ENCODE measurements at regions of chr11 and their contacts with region 1.

Region 1: DNA sequence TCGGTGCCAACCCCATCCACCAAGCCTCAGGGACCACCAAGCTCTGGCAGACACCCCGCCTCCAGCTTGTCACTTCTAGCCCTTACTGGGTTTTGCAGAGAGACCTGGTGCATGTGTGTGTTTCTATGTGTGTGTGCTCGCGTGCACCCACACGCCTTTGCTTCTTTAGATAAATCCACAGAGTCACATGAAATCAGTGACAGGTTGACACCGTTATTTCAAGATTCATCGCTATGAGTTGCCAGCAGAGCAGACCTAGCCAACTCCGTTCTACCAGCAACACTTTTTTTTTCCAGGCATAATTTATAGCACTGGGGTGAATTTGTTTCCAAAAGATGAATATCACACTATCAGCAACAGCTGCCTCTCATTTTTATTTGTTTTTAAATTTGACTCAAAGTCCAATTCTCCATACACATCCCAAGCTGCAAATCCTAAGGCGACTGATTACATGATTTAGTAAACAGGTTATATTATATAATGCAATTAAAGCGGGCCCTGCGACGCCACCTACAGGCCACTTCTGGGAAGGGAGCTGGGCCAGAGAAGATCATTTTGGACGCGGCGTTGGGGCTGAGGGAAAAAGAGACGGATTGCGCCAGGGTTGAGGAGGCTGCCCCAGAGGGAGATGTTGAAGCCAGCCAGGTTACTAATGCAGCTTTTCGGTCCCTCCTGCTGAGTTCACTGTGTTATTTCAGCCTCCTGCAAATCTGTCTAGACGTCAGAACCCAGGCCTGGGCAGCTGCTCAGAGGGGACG is 150.5 kb downstream of the FEZ1 start:
- DNase-seq: peak; percentile 32
- H3K4me3 ChIP-seq: no peak overlapping the region
- H3K27ac ChIP-seq: no peak overlapping the region
- H3K4me1 ChIP-seq: no peaks in the 10 kb centered on the region
- H3K27me3 ChIP-seq: no peaks in the 10 kb centered on the region
- CTCF ChIP-seq: peak; percentile 85 to 89

Region 2: GRCh38 chr11:124961972-124962609 is 383.5 kb before region 1 on chr11:
- CTCF ChIA-PET with region 1: no interaction called
- dilution Hi-C with region 1: no loop called
- in situ Hi-C with region 1: loop called (anchors 5 to 10 kb)
- intact Hi-C with region 1: loop called (anchors 1 kb)
- DNase-seq: peak; percentile 67
- H3K4me3 ChIP-seq: no peak overlapping the region
- H3K27ac ChIP-seq: no peak overlapping the region
- H3K4me1 ChIP-seq: no peaks in the 10 kb centered on the region
- H3K27me3 ChIP-seq: no peaks in the 10 kb centered on the region
- CTCF ChIP-seq: peak; percentile 73 to 76

Region 3: GRCh38 chr11:125091247-125091876 is 254.2 kb before region 1 on chr11:
- CTCF ChIA-PET with region 1: no interaction called
- dilution Hi-C with region 1: no loop called
- in situ Hi-C with region 1: no loop called
- intact Hi-C with region 1: loop called (anchors 2 kb)
- DNase-seq: peak; percentile 57
- H3K4me3 ChIP-seq: no peak overlapping the region
- H3K27ac ChIP-seq: no peak overlapping the region
- H3K4me1 ChIP-seq: peaks cover 14% of the 10 kb centered on the region
- H3K27me3 ChIP-seq: no peaks in the 10 kb centered on the region
- CTCF ChIP-seq: peak; percentile 46 to 53

Region 4: DNA sequence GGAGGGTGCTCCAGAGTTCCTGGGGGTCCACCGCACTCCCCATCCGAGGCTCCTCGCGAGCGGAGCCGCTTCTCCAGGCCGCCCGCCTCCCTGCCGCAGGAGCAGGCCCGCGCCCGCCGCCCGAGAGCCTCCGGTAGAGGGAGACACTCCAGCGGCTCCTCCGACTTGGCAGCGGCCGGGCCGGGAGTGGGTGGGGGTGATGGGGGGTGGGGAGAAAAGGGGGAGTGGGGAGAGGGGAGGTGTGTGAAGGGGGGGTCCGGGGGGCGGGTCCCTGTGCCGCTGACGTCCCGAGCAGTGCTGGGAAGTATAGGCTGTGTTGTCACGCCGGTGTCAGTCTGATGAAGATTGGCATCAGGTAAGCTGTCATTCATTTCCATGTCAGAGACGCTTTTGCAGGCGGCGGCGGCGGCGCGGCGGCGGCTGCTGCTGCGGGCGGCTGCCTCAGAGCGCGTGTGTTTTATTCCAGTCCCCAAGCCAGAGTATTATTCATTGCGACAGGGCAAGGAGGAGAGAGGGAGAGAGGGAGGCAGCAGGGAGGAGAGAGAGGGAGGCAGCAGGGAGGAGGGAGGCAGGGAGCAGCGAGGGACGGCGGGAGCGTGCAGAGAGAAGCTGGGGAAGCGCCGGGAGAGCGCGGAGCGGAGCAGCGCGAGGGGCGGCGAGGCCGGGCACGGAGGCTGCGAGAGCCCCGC is 181.0 kb before region 1 on chr11 and contains the start of gene PKNOX2:
- CTCF ChIA-PET with region 1: interaction called, 4 read pairs
- dilution Hi-C with region 1: no loop called
- in situ Hi-C with region 1: loop called (anchors 10 kb)
- intact Hi-C with region 1: loop called (anchors 1 kb)
- DNase-seq: peak; percentile 47
- H3K4me3 ChIP-seq: peak within 1 kb of the TSS; percentile 56 to 69 (median 59)
- H3K27ac ChIP-seq: no peak within 1 kb of the TSS
- H3K4me1 ChIP-seq: peaks cover 12% of the 10 kb centered on the region
- H3K27me3 ChIP-seq: peaks cover 11% of the 10 kb centered on the region
- CTCF ChIP-seq: peak; percentile 28 to 70
- total RNA-seq, gene PKNOX2: 0.16 to 0.33 TPM

Region 5: DNA sequence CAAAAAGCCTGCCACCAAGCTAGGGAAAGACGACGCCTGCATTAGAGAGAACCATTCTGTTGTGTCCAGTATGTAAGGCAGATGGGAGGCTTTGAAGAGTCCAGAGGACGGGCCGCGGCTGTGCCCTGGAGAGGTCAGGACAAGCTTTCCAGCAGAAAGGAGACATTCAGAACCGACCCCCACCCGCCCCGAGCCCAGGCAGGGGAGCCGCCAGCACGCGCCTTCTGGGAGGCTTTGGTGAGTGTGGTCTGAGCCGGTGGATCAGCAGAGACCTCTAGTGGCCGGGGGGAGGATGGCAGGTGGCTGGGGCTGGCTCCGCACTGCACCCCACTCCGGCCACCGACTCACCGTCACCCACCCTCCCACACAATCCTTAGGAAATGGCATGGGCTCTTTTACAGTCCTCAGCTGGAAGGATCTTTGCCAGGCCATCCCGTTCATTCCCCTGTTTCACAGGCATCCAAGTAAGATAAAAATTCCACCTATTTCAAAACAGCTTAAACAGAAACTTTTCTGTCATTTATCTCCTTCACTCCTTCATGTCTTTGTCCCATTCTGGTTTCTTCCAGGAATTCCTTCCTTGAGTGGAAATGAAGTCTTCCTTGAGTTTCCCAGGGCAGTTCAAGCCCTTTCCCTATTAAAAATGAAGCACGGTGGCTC is 59.3 kb after region 1 on chr11:
- CTCF ChIA-PET with region 1: no interaction called
- dilution Hi-C with region 1: no loop called
- in situ Hi-C with region 1: no loop called
- intact Hi-C with region 1: loop called (anchors 2 kb)
- DNase-seq: peak; percentile 27
- H3K4me3 ChIP-seq: no peak overlapping the region
- H3K27ac ChIP-seq: no peak overlapping the region
- H3K4me1 ChIP-seq: peaks cover 11% of the 10 kb centered on the region
- H3K27me3 ChIP-seq: no peaks in the 10 kb centered on the region
- CTCF ChIP-seq: peak; percentile 81 to 96

Region 6: DNA sequence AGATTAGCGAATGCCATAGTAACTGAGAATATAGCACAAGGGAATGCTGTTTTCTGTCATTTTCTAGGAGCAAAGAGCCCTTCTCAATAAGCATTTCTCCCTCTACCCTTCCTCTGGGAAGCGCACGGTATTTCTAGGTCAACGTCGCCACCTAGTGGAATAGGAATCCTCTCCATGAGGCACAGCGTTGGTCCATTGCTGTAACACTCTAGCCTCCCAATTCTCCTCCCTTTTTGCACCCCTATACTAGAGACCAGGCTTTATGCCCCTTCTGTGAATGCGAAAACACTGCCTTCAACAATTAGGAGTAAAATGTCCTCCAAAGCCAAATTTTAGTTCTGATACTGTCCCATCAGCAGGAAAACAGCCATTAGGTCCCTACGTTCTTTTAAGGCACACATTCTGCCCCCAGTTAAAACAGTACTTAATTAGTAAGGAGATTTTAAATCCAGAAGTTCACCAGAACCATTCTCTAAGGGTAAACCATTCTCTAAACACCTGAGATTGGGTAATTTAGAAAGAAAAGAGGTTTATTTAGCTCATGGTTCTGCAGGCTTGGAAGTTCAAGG is 529.0 kb after region 1 on chr11:
- CTCF ChIA-PET with region 1: no interaction called
- dilution Hi-C with region 1: no loop called
- in situ Hi-C with region 1: no loop called
- intact Hi-C with region 1: loop called (anchors 1 kb)
- DNase-seq: peak; percentile 44
- H3K4me3 ChIP-seq: no peak overlapping the region
- H3K27ac ChIP-seq: no peak overlapping the region
- H3K4me1 ChIP-seq: no peaks in the 10 kb centered on the region
- H3K27me3 ChIP-seq: no peaks in the 10 kb centered on the region
- CTCF ChIP-seq: peak; percentile 83 to 85

Measured in mammary epithelial cell (primary cell).